Activated CD8-positive, alpha-beta T cell treated with anti-CD3 and anti-CD28 coated beads, Interleukin-2, amount 10 ng/mL, durations not matched to agents 7 days and 5 days (primary cell): ENCODE measurements at regions of chr1 and their contacts with region 1.

Region 1: GRCh38 chr1:40404670-40405462 is 31.3 kb downstream of the SMAP2 start:
- DNase-seq: peak; percentile 67
- ATAC-seq: peak; percentile 57
- H3K4me3 Mint-ChIP-seq: no peak overlapping the region
- H3K27ac Mint-ChIP-seq: peak overlapping the region; percentile 75
- H3K4me1 Mint-ChIP-seq: peaks cover 52% of the 10 kb centered on the region
- H3K27me3 Mint-ChIP-seq: no peaks in the 10 kb centered on the region

Region 2: GRCh38 chr1:40143891-40144575 is 260.8 kb before region 1 on chr1:
- CTCF ChIA-PET with region 1: interaction called, 25 read pairs
- POLR2A ChIA-PET with region 1: no interaction called
- DNase-seq: peak; percentile 67
- ATAC-seq: peak; percentile 73
- H3K4me3 Mint-ChIP-seq: no peak overlapping the region
- H3K27ac Mint-ChIP-seq: no peak overlapping the region
- H3K4me1 Mint-ChIP-seq: peaks cover 3% of the 10 kb centered on the region
- H3K27me3 Mint-ChIP-seq: peaks cover 45% of the 10 kb centered on the region

Region 3: DNA sequence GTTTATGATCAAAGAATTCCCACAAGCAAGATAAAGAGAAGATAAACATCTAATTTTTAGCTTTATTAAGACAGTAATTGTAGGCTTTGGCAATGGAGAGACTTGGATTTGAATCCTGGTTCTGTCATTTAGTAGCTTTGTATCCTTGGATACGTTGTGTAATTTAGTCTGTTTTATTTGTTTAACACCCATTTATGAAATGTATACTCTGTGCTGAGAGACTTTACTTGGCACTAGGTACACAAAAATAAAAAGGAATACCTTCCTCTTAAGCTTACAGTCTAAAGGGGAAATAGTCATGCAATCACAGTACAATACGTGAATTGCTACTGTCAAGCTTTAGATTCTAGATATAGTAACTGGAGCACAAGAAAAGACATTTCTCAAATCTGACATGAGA is 123.0 kb before region 1 on chr1:
- CTCF ChIA-PET with region 1: interaction called, 10 read pairs
- POLR2A ChIA-PET with region 1: no interaction called
- DNase-seq: no peak
- ATAC-seq: no peak
- H3K4me3 Mint-ChIP-seq: no peak overlapping the region
- H3K27ac Mint-ChIP-seq: no peak overlapping the region
- H3K4me1 Mint-ChIP-seq: peaks cover 3% of the 10 kb centered on the region
- H3K27me3 Mint-ChIP-seq: no peaks in the 10 kb centered on the region

Region 4: DNA sequence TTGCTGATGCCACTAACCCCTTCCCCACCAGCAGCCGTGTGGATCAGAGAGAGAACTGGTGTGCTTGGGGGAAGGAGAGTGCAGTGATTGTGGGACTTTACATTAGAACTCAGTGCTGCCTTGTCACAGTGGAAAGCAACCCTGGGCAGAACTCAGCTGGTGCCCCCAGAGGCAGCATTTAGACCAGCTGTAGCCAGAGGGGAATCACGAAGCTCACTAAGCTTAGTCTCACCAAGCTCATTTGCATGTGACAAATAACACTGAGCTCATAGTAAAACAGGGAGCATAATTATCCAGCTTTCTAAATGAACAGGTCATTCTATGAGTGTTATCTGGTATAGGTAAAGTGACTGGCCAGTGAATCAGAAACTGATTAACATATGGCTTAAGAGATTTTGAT is 41.1 kb before region 1 on chr1:
- CTCF ChIA-PET with region 1: interaction called, 16 read pairs
- POLR2A ChIA-PET with region 1: no interaction called
- DNase-seq: no peak
- ATAC-seq: no peak
- H3K4me3 Mint-ChIP-seq: no peak overlapping the region
- H3K27ac Mint-ChIP-seq: no peak overlapping the region
- H3K4me1 Mint-ChIP-seq: peaks cover 5% of the 10 kb centered on the region
- H3K27me3 Mint-ChIP-seq: no peaks in the 10 kb centered on the region

Region 5: DNA sequence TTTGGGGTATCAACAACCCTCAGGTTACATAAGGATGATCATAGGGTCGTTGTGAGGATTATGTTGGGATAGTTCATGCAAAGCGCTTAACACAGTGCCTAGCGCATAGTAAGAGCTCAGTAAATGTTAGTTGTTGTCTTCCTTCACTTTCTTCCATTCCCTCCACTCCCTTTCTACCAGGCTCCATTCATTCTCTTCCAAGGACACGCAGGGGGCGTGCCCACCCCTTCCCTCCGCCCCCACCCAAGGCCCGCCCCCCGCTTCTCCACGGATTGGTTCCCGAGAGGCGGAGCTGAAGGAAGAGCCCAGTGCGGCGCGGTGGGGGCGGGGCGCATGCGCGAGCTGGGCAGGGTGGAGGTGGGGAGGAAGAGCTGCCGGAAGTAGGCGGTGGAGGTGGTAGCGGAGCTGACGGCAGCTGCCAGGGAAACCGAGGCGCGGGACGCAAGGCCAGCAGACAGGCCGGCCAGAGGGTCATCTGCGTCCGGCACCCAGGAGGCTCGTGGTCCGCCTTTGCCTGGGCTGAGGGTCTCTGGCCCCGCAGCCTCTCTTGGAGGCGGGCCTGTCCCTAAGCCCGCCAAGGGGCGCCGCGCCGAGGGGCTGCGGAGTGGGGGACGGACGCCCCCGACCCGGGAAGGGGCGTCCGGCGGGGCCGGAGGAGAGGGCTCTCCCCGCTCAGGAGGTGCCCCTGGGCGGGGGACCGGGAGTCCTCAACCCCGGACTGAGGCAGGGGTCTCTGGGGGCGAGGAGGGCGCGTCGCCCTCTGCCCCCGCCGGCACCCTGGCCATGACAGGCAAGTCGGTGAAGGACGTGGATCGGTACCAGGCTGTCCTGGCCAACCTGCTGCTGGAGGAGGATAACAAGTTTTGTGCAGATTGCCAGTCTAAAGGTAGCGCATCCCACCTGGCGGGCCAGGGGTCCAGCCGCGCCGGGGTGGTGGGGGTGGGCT is 31.3 kb before region 1 on chr1 and contains the start of gene SMAP2:
- CTCF ChIA-PET with region 1: interaction called, 206 read pairs
- POLR2A ChIA-PET with region 1: interaction called, 13 read pairs
- DNase-seq: peak; percentile 97
- ATAC-seq: peak; percentile 87
- H3K4me3 Mint-ChIP-seq: peak within 1 kb of the TSS; percentile 94
- H3K27ac Mint-ChIP-seq: peak within 1 kb of the TSS; percentile 97
- H3K4me1 Mint-ChIP-seq: peaks cover 42% of the 10 kb centered on the region
- H3K27me3 Mint-ChIP-seq: no peaks in the 10 kb centered on the region
- total RNA-seq, gene SMAP2: 106 to 107 TPM

Region 6: GRCh38 chr1:40385437-40386358 is 19.2 kb before region 1 on chr1:
- CTCF ChIA-PET with region 1: interaction called, 206 read pairs
- POLR2A ChIA-PET with region 1: interaction called, 149 read pairs
- DNase-seq: peak; percentile 84
- ATAC-seq: peak; percentile 68
- H3K4me3 Mint-ChIP-seq: peak overlapping the region; percentile 79
- H3K27ac Mint-ChIP-seq: peak overlapping the region; percentile 99
- H3K4me1 Mint-ChIP-seq: peaks cover 94% of the 10 kb centered on the region
- H3K27me3 Mint-ChIP-seq: no peaks in the 10 kb centered on the region

Region 7: DNA sequence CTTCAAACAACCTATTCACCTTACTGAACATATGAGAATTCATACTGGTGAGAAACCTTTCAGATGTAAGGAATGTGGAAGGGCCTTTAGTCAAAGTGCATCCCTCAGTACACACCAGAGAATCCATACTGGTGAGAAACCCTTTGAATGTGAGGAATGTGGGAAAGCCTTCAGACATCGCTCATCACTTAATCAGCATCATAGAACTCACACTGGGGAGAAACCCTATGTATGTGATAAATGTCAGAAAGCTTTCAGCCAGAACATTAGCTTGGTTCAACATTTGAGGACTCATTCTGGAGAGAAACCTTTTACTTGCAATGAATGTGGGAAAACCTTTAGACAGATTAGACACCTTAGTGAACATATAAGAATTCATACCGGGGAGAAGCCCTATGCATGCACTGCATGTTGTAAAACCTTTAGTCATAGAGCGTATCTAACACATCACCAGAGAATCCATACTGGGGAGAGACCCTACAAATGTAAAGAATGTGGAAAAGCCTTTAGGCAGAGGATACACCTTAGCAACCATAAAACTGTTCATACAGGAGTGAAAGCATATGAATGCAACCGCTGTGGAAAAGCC is 90.5 kb after region 1 on chr1:
- CTCF ChIA-PET with region 1: no interaction called
- POLR2A ChIA-PET with region 1: no interaction called
- DNase-seq: no peak
- ATAC-seq: no peak
- H3K4me3 Mint-ChIP-seq: no peak overlapping the region
- H3K27ac Mint-ChIP-seq: no peak overlapping the region
- H3K4me1 Mint-ChIP-seq: no peaks in the 10 kb centered on the region
- H3K27me3 Mint-ChIP-seq: no peaks in the 10 kb centered on the region